Left cardiac atrium (tissue), 4 donors: ENCODE measurements at regions of chr14 and their contacts with region 1.

Region 1: GRCh38 chr14:87483271-87484260 is 509.4 kb downstream of the GALC start:
- DNase-seq: no peak
- ATAC-seq: no peak

Region 2: DNA sequence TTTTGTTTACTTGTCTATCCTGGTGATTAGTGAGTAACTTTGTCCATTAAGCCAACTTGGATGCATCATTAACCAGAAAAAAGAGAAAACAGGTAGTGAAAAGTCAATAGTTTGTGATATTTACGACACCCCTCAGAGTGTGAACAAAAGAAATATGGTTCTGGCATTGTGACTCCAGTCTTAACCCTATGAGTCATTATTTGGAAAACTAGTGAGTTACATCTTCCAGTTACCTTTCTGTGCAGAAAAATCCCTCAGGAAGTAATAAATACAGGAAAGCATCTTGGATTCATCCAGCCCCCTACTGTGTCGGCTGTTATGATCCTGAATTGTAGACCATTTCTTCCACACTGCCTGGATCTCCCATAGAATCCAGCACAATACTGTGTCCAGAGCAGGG is 130.3 kb after region 1 on chr14:
- intact Hi-C with region 1: loop called in 1 of 2 experiments (anchors 5 kb)
- DNase-seq: no peak
- ATAC-seq: no peak